HCT116 (cell line): ENCODE measurements at regions of chr12 and their contacts with region 1.

Region 1: GRCh38 chr12:48901278-48901677 is 24.0 kb downstream of the FKBP11 start:
- DNase-seq: no peak
- ATAC-seq: no peak
- H3K4me3 ChIP-seq: no peak overlapping the region
- H3K27ac ChIP-seq: no peak overlapping the region
- H3K4me1 ChIP-seq: peaks cover 0 to 3% of the 10 kb centered on the region in 2 experiments; a peak in 1 of 4 replicates
- H3K27me3 ChIP-seq: no peaks in the 10 kb centered on the region
- CTCF ChIP-seq: no peak
- POLR2A ChIP-seq: no peak
- RAD21 ChIP-seq: no peak

Region 2: DNA sequence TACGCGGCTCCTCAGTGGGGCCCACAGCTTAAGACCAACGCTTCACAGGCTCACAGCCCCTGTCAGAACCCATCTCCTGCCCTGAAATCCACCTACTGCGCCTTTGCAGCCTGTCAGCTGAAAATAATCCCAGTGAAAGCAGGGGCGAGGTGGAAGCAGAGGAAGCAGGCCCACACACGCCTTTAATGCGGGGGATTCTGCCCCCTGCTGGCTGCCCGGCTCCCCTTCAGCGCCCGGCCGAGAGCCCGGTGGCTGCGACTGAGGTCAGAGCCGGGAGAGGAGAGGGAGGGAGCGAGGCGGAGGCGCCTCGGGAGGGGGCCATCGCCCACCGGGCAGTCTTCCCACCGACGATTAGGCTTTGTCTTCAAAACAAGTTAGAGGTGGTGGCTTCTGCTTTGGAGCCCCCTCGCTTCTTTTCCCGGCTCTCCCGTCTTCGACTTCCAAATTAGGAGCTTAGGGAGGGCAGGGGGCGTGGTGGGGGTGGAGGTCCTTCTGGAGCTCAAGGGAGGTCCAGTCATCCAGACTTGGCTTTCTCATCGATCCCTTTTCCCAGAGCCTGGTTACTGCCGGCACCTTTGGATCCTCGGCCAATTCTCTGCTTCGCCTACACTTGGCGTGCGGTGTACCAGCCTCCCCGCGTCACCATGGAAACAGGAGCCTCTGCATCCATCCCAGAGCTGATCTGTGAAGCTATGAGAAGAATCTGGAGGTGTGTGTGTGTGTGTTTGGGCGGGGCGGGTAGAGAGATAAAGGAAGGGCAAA is 10.4 kb before region 1 on chr12:
- CTCF ChIA-PET with region 1: interaction called, 26 read pairs
- POLR2A ChIA-PET with region 1: no interaction called
- RAD21 ChIA-PET with region 1: no interaction called
- intact Hi-C with region 1: no loop called
- DNase-seq: peak; percentile 27
- ATAC-seq: peak; percentile 97
- H3K4me3 ChIP-seq: no peak overlapping the region
- H3K27ac ChIP-seq: no peak overlapping the region
- H3K4me1 ChIP-seq: peaks cover 0 to 12% of the 10 kb centered on the region in 2 experiments; a peak in 2 of 4 replicates
- H3K27me3 ChIP-seq: peaks cover 3% of the 10 kb centered on the region; the same call in 1 of the 2 replicates
- CTCF ChIP-seq: peak; percentile 90 to 93 (median 92)
- POLR2A ChIP-seq: no peak
- RAD21 ChIP-seq: peak; percentile 84